CD4-positive, alpha-beta memory T cell (primary cell): ENCODE measurements at regions of chr1 and their contacts with region 1.

Region 1: GRCh38 chr1:182143154-182143657 is 81.7 kb upstream of the ZNF648 start:
- DNase-seq: peak; percentile 73 to 79 (median 79)
- H3K4me3 ChIP-seq: no peak overlapping the region
- H3K4me3 Mint-ChIP-seq: no peak overlapping the region
- H3K27ac ChIP-seq: no peak overlapping the region
- H3K27ac Mint-ChIP-seq: no peak overlapping the region
- H3K4me1 ChIP-seq: no peaks in the 10 kb centered on the region
- H3K4me1 Mint-ChIP-seq: peaks cover 0 to 6% (median 5%) of the 10 kb centered on the region in 4 donors
- H3K27me3 ChIP-seq: no peaks in the 10 kb centered on the region
- H3K27me3 Mint-ChIP-seq: peaks cover 5 to 9% of the 10 kb centered on the region in 2 donors

Region 2: DNA sequence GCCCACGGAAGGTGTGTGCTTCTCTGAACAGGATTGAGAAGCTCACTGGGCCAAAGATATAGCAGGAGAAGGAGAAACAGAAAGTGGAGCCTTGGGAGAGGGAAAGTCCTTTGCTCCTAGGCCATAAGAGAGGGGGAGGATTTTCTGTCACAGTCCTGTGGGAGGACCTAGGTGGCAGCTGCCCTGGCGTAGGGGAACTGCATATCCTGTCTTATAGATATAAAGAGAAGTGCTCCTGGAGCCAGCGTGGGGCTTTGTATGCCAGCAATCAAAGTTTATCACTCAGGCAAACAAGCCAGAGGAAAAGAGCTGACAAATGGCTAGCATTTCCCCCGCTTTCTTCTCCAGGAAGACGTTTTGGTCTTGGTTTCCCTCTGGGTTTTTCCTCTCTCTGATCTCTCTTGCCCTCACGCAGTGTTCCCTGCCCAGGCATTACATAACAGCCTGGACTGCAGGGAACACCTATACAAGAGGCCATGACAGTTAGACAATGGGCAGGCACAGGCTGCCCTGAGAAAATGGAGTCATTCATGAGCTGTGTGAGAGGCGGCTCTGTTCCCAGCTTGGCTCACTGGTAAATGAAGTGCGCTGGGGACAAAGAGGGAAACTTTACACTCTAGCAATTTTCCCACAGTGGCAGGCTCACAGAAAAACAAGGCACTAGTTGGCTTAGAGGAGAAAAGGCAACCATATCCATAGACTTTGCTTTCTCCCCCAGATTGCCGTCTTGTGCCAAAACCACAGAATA is 29.2 kb before region 1 on chr1:
- CTCF ChIA-PET with region 1: interaction called, 17 read pairs
- POLR2A ChIA-PET with region 1: no interaction called
- intact Hi-C with region 1: no loop called
- DNase-seq: no peak
- H3K4me3 ChIP-seq: no peak overlapping the region
- H3K4me3 Mint-ChIP-seq: peak overlapping the region in 1 of 8 donors; percentile 43
- H3K27ac ChIP-seq: no peak overlapping the region
- H3K27ac Mint-ChIP-seq: no peak overlapping the region
- H3K4me1 ChIP-seq: no peaks in the 10 kb centered on the region
- H3K4me1 Mint-ChIP-seq: peaks cover 0 to 3% (median 1%) of the 10 kb centered on the region in 4 donors
- H3K27me3 ChIP-seq: no peaks in the 10 kb centered on the region
- H3K27me3 Mint-ChIP-seq: peaks cover 5 to 27% of the 10 kb centered on the region in 2 donors

Region 3: DNA sequence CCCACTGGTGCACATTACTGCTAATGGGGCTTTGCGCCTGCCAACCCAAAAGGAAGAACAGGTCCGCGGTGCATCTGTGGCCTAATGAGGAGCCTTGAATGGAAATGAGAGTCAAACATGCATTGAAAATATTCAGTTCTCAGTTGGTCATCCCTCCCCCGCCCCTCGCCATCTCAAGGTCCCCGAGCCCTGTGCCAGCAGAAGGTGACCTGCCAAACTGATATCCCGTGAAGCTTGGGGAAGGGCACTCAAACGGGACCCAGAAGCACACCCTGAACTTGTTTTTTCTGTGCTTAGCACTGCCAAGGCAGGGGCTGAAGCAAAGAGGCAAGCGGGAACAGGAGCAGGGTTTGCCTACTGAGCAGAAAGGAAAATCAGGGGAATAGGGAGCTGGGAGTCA is 13.8 kb before region 1 on chr1:
- CTCF ChIA-PET with region 1: interaction called, 44 read pairs
- POLR2A ChIA-PET with region 1: no interaction called
- intact Hi-C with region 1: no loop called
- DNase-seq: no peak
- H3K4me3 ChIP-seq: no peak overlapping the region
- H3K4me3 Mint-ChIP-seq: no peak overlapping the region
- H3K27ac ChIP-seq: no peak overlapping the region
- H3K27ac Mint-ChIP-seq: no peak overlapping the region
- H3K4me1 ChIP-seq: no peaks in the 10 kb centered on the region
- H3K4me1 Mint-ChIP-seq: no peaks in the 10 kb centered on the region
- H3K27me3 ChIP-seq: no peaks in the 10 kb centered on the region
- H3K27me3 Mint-ChIP-seq: no peaks in the 10 kb centered on the region

Region 4: DNA sequence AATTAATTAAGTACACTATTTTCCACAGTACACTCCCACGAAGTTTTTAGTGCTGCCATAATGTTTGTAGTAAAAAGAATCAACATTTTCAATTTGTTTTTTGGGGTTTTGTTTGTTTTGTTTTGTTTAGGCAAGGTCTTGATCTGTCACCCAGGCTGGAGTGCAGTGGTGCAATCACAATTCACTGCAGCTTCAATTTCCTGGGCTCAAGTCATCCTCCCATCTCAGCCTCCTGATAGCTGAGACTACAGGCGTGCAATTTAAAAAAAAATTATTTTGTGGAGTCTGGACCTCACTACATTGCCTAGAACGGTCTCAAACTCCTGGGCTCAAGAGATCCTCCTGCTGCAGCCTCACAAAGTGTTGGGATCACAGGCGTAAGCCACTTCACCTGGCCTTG is 237.0 kb after region 1 on chr1:
- CTCF ChIA-PET with region 1: interaction called, 11 read pairs
- POLR2A ChIA-PET with region 1: no interaction called
- intact Hi-C with region 1: no loop called
- DNase-seq: no peak
- H3K4me3 ChIP-seq: no peak overlapping the region
- H3K4me3 Mint-ChIP-seq: no peak overlapping the region
- H3K27ac ChIP-seq: no peak overlapping the region
- H3K27ac Mint-ChIP-seq: no peak overlapping the region
- H3K4me1 ChIP-seq: no peaks in the 10 kb centered on the region
- H3K4me1 Mint-ChIP-seq: no peaks in the 10 kb centered on the region
- H3K27me3 ChIP-seq: no peaks in the 10 kb centered on the region
- H3K27me3 Mint-ChIP-seq: no peaks in the 10 kb centered on the region

Region 5: GRCh38 chr1:182397771-182398393 is 254.7 kb after region 1 on chr1:
- CTCF ChIA-PET with region 1: interaction called, 357 read pairs
- POLR2A ChIA-PET with region 1: interaction called, 18 read pairs
- intact Hi-C with region 1: loop called (anchors 1 kb)
- DNase-seq: no peak
- H3K4me3 ChIP-seq: no peak overlapping the region
- H3K4me3 Mint-ChIP-seq: no peak overlapping the region
- H3K27ac ChIP-seq: no peak overlapping the region
- H3K27ac Mint-ChIP-seq: peak overlapping the region in 2 of 7 donors; percentile 13 to 60
- H3K4me1 ChIP-seq: peaks cover 5% of the 10 kb centered on the region
- H3K4me1 Mint-ChIP-seq: peaks cover 5 to 12% (median 8%) of the 10 kb centered on the region in 4 donors
- H3K27me3 ChIP-seq: no peaks in the 10 kb centered on the region
- H3K27me3 Mint-ChIP-seq: no peaks in the 10 kb centered on the region

Region 6: DNA sequence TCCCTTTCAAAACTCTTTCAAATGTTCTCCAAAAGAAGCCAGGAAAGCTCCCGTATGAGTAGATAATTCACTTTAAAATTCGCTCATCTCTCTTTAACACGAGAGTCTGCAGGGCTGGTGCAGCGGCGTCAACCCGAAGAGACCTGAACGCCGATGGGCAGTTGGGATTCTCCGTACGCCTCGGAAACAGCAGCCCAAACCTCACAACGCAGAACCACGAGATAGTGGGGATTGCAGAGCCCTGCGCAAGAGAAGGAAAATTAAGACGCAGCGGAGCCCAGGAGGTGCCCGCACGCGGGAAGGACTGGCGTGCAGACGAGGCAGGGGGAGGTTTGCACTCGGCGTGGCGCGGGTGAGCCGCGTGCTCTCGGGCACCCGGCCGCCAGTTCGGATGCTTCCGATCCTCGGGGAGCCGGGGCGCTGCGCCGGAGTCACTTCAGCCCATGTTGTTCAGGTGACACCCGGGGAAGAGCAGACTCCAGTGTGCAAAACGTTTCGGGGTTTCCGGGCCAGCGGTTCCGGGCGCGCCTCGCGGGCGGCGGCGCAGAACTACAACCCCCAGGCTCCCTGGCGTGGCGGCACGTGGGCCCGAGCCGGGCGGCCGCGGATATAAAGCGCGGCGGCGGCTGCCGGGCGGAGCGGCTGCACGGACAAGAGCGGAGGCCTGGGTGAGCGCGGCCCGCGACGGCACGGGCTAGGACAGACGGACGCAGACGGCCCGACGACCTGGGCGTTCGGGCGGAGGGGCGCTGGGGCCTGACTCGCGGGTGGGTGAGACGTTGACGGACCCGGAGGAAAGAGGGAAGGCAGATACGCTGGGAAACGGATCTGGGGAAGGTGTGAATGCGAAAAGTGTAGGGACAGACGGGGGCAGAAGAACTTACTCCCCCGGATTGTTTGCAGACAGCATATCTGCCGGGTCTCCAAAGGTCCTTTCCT is 646.2 kb after region 1 on chr1 and contains the start of gene NPL:
- CTCF ChIA-PET with region 1: no interaction called
- POLR2A ChIA-PET with region 1: no interaction called
- intact Hi-C with region 1: no loop called
- DNase-seq: peak; percentile 86 to 89 (median 88)
- H3K4me3 ChIP-seq: peak within 1 kb of the TSS; percentile 69 to 88
- H3K4me3 Mint-ChIP-seq: peak within 1 kb of the TSS; percentile 89 to 94 (median 92)
- H3K27ac ChIP-seq: peak within 1 kb of the TSS; percentile 67
- H3K27ac Mint-ChIP-seq: peak within 1 kb of the TSS; percentile 78 to 92 (median 90)
- H3K4me1 ChIP-seq: peaks cover 13% of the 10 kb centered on the region
- H3K4me1 Mint-ChIP-seq: peaks cover 10 to 16% (median 11%) of the 10 kb centered on the region in 4 donors
- H3K27me3 ChIP-seq: no peaks in the 10 kb centered on the region
- H3K27me3 Mint-ChIP-seq: no peaks in the 10 kb centered on the region
- total RNA-seq, gene NPL: 9.6 TPM